Ascending aorta (tissue), 2 donors: ENCODE measurements at regions of chr3 and their contacts with region 1.

Region 1: DNA sequence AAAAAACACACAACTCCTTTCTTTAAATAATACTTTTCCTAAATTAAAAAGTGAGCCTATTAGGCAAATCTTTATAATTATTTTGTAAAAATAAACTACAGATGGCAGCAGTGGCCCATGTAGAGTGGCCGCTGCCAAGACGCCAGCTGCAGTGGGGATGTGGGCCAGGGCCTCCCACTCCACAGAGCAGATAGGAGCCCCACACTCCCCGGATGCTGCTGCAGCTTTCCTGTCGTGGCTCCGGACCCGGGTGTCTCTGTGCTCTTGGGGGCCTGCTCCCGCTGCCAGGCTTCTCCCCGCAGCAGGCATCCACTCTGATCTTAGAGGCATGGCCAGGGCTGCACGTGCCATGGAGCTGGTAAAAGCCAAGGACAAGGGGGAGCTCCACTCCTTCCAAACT is 67.5 kb downstream of the PROS1 start:
- DNase-seq: no peak
- H3K4me3 ChIP-seq: no peak overlapping the region
- H3K27ac ChIP-seq: no peak overlapping the region
- H3K4me1 ChIP-seq: no peaks in the 10 kb centered on the region
- H3K27me3 ChIP-seq: no peaks in the 10 kb centered on the region
- CTCF ChIP-seq: no peak

Region 2: DNA sequence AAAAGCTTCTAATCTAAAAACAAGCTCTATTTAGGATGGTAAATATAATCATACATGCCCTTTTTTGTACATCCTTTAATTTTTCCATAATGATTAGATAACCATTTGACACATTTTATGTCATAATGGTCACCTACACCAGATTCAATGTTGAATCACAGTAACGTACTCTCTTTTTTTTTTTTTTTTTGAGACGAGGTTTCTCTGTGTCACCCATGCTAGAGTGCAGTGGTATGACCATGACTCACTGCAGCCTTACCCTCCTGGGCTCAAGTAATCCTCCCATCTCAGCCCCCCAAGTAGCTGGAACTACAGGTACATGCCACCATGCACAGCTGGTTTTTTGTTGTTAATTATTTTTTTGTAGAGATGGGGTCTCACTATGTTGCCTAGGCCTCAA is 18.2 kb after region 1 on chr3:
- intact Hi-C with region 1: no loop called
- DNase-seq: no peak
- H3K4me3 ChIP-seq: no peak overlapping the region
- H3K27ac ChIP-seq: no peak overlapping the region
- H3K4me1 ChIP-seq: no peaks in the 10 kb centered on the region
- H3K27me3 ChIP-seq: no peaks in the 10 kb centered on the region
- CTCF ChIP-seq: no peak

Region 3: DNA sequence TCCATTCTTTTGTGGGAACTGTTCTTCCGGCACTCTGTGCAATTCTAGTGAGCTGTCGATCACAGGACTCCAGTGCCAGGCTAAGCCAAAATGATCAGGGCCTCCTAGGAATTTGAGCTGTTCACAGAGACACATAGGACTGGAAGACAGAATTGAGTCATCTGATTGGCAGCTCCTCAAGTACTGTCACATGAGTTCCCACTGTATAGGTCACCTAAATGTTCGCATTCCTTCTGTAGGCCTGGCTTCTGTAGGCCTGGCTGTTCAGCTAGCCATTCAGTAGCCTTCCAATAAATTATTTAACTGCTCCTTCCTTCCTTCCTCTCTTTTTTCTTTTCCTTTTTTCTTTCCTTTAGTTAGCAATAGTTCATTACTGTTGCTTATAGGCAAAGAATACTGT is 63.2 kb after region 1 on chr3:
- intact Hi-C with region 1: loop called (anchors 10 kb)
- DNase-seq: no peak
- H3K4me3 ChIP-seq: no peak overlapping the region
- H3K27ac ChIP-seq: peak overlapping the region; percentile 10 to 49
- H3K4me1 ChIP-seq: peaks cover 9 to 11% of the 10 kb centered on the region in 2 donors
- H3K27me3 ChIP-seq: no peaks in the 10 kb centered on the region
- CTCF ChIP-seq: no peak

Region 4: DNA sequence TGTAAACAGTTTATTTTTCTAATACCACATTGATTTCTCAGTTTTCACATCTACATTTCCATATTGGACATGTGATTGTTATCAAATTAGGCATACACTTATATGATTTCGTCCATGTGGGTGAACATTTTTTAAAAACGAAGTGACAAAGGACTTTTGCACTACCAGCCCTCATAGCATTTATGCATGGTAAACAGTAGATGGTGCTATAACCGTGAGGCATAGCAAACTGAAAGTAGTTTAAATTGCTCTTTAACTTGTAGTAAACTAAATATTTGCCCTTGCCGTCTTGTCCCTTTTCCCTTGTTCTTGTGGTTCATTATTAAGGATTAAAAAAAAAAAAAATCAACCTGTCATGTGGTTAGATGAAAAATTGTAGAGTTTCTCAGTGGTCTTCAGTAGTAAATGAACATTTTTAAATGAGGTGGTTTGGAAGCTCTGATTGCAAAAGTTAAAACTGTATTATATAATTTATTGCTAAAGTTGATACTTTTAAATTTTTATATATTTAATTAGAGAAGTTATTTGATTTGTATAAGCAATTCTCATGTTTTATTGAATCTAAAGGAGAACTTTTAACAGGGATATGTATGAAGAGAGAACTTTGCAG is 98.2 kb after region 1 on chr3:
- intact Hi-C with region 1: no loop called
- DNase-seq: no peak
- H3K4me3 ChIP-seq: peak overlapping the region; percentile 34 to 52
- H3K27ac ChIP-seq: no peak overlapping the region
- H3K4me1 ChIP-seq: peaks cover 0 to 12% of the 10 kb centered on the region in 2 donors
- H3K27me3 ChIP-seq: no peaks in the 10 kb centered on the region
- CTCF ChIP-seq: peak; percentile 53 to 83 (median 72)

Region 5: DNA sequence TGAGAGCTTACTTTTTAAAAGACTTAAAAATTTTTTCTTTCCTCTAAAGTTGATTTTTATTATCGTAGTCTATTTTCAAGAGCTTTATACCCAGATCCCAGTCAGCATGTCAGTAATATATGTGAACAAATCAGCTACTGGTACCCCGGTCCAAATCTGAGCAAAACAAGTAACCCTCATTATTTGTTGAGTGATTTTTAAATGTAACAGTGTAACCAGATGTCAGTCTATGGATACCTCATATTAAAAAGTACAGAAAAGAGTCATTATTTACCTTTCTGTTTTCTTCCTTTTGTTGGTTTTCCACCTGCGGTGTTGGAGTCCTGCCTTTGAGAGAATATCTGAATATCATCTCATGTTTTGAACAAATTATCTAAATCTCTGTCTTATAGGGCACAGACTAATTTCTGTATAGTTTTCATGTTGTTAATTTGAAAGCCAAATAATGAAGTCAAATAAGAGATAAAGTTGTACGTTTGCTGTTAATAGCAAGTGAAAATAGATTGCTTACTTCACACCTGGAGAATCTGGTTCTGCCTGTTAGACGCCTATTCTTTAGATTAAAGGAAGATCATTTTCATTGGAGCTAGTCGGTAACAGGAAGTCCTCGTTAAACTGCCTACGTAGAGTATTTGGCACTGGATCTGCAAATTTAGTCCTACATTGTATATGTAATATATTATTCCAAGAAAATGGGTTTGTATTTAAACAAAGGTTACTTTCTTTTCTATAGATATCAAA is 122.0 kb after region 1 on chr3 and contains the start of gene STX19:
- intact Hi-C with region 1: no loop called
- DNase-seq: no peak
- H3K4me3 ChIP-seq: no peak within 1 kb of the TSS
- H3K27ac ChIP-seq: no peak within 1 kb of the TSS
- H3K4me1 ChIP-seq: peaks cover 0 to 4% of the 10 kb centered on the region in 2 donors
- H3K27me3 ChIP-seq: no peaks in the 10 kb centered on the region
- CTCF ChIP-seq: no peak
- total RNA-seq, gene STX19: not detected